Posterior vena cava (tissue), 2 donors: ENCODE measurements at regions of chr1 and their contacts with region 1.

Region 1: GRCh38 chr1:59421232-59421920 is 124.5 kb downstream of the FGGY start:
- DNase-seq: no peak

Region 2: GRCh38 chr1:59393211-59394180 is 27.9 kb before region 1 on chr1:
- intact Hi-C with region 1: loop called in 1 of 2 experiments (anchors 1 kb)
- DNase-seq: peak; percentile 91

Region 3: DNA sequence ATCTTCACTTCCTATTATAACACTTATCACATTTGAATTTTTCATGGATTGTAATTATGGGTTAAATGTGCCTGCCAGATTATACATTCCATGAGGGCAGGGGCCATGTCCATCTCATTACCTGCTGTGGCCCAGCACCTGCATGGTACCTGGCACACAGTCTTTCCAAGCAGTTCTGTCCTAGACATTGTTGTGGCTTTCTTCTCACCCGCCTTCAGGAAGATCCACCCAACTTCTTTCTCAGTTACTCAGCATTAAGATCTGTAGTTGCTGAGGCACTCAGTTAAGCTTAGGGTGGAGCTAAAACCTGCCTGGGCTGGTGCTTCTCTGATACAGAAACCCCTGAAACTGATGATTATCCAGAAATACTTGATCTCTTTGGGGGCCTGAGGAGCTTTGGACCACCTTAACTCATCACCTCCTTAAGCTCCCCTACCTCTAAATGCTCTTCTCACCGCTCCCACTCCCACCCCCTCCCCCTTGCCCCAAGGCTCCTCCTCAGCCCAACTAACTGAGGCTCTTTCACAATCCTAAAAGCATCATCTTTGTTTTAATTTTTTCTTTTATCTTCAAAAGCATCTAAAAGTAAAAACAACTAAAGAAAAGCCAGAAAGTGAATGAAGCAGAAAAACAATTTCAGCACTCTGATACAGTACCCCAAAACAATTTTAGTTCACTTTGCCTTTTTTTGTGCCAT is 66.1 kb after region 1 on chr1:
- intact Hi-C with region 1: no loop called
- DNase-seq: no peak

Region 4: GRCh38 chr1:59520827-59521418 is 99.5 kb after region 1 on chr1:
- intact Hi-C with region 1: no loop called
- DNase-seq: no peak

Region 5: DNA sequence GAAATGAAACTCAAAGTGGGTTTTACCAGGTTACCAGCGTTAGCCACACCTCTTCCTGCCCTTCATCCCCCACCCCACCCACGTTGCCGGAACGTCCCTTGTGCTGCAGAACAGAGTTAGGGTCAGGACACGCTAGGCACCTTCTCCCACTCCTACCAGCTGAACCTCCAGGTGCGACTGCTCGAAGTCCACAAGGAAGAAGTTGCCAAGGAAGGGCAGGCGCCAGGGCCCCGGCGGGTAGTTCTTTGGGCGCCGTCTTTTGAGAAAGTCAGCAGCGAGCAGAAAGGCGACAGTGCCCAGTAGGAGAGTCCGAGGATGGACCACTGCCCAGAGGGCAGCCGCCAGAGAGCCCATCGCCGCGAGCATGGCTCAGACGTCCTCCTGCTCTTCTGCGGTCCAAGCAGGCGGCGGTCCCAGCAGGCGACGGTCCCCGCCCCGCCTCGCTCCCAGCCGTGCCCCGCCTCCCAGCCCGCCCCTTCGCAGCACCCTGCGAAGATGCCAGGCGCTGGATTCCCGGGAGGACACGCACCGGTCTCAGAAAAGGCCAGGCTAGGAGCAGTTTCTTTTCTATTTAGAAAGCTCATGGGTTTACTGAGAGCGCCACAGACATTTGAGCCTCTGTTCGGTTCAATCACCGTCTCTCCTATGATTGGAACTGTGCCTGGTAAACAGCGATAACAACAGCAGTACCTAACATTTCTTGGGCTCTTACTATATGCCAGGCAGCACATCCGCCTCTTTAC is 505.2 kb after region 1 on chr1 and contains the start of gene CYP2J2:
- intact Hi-C with region 1: no loop called
- DNase-seq: peak; percentile 78
- total RNA-seq, gene CYP2J2: not detected